Activated T-helper 1 cell treated with anti-CD3 and anti-CD28 coated beads, Interleukin-12 subunit alpha, Interleukin-12 subunit beta, Interleukin-2, Interleukin-4 antibody, amounts not matched to agents 30 ng/mL and 10 ng/mL and 1 ng/mL, durations not matched to agents 14 hours and 24 hours and 36 hours (primary cell): ENCODE measurements at regions of chr12 and their contacts with region 1.

Region 1: DNA sequence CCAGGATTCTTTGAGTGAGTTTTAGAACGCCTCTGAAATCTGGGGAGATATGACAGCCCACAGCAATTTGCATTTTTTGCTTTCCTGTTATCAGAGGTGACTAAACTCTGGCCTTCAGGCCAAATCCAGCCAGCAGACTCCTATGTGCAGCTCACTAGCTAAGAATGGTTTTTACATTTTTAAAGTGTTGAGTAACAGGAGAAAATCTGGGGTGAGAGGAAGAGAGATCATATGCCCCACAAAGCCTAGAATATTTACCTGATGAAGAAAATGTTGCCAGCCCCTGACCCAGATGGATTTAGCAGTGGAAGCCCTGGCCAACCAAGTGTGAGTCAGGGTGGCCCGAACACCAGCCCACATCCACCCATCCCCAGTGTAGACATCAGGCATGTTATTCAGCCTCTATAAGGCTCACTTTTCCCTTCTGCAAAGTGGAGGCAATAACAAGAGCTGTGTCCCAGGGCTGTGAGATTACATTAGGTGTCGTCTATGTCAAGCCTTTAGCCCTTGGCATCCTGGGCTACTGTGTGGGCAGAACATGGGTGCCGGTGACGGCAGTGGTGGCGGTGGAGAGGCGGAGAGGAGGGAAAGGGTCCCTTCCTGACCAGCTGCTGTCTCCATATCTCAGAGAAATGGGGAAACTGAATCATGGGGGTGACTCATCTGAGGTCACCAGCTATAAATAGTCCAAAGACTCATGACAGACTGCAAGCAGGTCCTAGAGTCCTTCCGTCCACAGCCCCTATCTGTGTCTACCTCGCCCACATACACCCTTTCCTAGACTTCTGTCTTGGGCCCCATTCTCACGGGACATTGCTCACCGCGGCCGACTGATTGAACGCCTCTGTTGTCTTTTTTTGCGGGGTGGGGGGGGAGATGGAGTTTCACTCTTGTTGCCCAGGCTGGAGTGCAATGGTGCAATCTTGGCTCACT is 32.6 kb upstream of the CD9 start:
- DNase-seq: peak; percentile 35
- H3K4me3 Mint-ChIP-seq: peak overlapping the region; percentile 6
- H3K27ac Mint-ChIP-seq: peak overlapping the region; percentile 87
- H3K4me1 Mint-ChIP-seq: peaks cover 28% of the 10 kb centered on the region
- H3K27me3 Mint-ChIP-seq: no peaks in the 10 kb centered on the region

Region 2: DNA sequence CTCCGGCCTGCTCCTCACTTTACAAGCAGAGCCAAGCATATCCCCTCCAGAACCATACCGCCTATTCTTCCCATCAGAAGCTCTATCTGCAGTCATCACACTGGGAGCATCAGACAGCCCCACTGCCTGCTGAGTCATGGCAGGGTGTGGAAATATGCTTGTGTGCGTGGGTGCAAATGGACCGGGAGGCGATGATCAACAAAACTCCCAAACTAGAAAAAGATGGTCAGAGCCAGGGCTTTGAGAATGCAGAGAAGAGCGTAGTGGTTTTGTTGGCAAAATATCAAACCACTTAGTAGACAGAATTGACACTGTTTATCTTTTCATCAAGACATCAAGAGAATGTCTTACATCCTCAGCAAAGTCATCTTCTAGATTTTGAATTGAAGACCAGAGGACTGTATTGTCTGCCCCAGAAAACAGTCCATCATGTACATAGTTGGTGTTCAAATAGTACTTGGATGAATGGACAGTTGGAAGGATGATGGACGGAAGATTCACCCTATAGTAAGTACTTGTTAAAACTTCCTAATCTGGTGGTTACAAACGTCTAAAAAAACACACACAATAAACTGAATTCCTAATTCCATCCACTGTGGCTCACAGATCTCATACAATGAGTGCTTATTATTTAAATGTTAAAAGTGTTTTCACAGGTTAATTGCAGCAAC is 98.0 kb before region 1 on chr12:
- intact Hi-C with region 1: loop called (anchors 1 kb)
- DNase-seq: no peak
- H3K4me3 Mint-ChIP-seq: no peak overlapping the region
- H3K27ac Mint-ChIP-seq: peak overlapping the region; percentile 83
- H3K4me1 Mint-ChIP-seq: peaks cover 28% of the 10 kb centered on the region
- H3K27me3 Mint-ChIP-seq: peaks cover 20% of the 10 kb centered on the region

Region 3: GRCh38 chr12:6140651-6141447 is 26.7 kb before region 1 on chr12:
- intact Hi-C with region 1: loop called (anchors 1 kb)
- DNase-seq: no peak
- H3K4me3 Mint-ChIP-seq: peak overlapping the region; percentile 48
- H3K27ac Mint-ChIP-seq: peak overlapping the region; percentile 93
- H3K4me1 Mint-ChIP-seq: peaks cover 38% of the 10 kb centered on the region
- H3K27me3 Mint-ChIP-seq: no peaks in the 10 kb centered on the region

Region 4: DNA sequence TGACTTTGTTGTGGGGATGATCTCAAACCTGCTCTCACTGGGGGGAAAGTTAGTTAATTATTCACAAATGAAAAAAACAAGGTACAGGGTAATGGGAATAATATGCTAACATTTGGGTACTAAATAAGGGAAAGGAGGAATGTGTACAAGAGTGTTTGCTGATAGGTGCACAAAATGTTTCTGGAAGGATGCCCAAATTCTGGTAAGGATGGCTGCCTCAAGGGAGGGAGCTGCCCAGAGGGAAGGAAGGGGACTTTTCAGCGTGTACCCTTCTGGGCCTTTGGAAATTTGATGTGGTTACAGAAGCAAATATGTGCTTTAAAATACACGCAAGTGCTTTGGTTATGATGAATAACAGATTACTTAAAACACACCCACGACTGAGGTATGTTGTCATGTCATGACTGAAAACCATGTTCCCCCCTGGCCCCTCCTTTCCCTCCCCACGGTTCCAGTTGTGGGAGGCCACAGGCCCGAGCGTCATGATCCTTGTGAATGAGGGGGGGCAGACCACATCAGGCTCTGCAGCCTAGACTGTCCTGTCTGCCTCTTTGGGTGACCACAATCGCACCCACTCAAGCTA is 99.6 kb after region 1 on chr12:
- intact Hi-C with region 1: loop called (anchors 1 kb)
- DNase-seq: no peak
- H3K4me3 Mint-ChIP-seq: no peak overlapping the region
- H3K27ac Mint-ChIP-seq: peak overlapping the region; percentile 82
- H3K4me1 Mint-ChIP-seq: peaks cover 24% of the 10 kb centered on the region
- H3K27me3 Mint-ChIP-seq: peaks cover 2% of the 10 kb centered on the region

Region 5: GRCh38 chr12:6278439-6279255 is 111.1 kb after region 1 on chr12:
- intact Hi-C with region 1: loop called (anchors 1 kb)
- DNase-seq: peak; percentile 85
- H3K4me3 Mint-ChIP-seq: peak overlapping the region; percentile 83
- H3K27ac Mint-ChIP-seq: peak overlapping the region; percentile 88
- H3K4me1 Mint-ChIP-seq: peaks cover 8% of the 10 kb centered on the region
- H3K27me3 Mint-ChIP-seq: peaks cover 13% of the 10 kb centered on the region